Heart left ventricle (tissue), 16 donors: ENCODE measurements at regions of chr4 and their contacts with region 1.

Region 1: DNA sequence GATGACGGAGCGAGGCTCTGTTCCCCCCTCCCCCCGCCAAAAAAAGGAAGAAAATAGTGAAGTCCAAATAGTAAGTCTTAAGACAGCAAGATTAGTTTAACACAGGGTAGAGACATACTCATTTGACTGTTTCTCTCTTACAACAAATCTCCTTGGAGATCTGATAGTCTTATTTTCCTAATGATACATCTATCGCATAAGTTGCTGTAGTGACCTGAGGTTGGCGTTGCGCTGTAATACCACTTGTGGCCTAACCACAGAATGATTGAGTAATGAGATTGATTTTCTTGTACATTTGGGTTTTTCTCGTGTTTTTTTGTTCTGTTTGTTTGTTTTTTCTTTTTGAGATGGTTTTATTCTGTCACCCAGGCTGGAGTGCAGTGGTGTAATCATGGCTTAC is 27.2 kb downstream of the OCIAD1 start:
- DNase-seq: no peak
- ATAC-seq: no peak
- H3K4me3 ChIP-seq: no peak overlapping the region
- H3K27ac ChIP-seq: no peak overlapping the region
- H3K4me1 ChIP-seq: no peaks in the 10 kb centered on the region
- H3K27me3 ChIP-seq: no peaks in the 10 kb centered on the region
- CTCF ChIP-seq: peak in 1 of 12 donors; percentile 7
- POLR2A ChIP-seq: no peak

Region 2: DNA sequence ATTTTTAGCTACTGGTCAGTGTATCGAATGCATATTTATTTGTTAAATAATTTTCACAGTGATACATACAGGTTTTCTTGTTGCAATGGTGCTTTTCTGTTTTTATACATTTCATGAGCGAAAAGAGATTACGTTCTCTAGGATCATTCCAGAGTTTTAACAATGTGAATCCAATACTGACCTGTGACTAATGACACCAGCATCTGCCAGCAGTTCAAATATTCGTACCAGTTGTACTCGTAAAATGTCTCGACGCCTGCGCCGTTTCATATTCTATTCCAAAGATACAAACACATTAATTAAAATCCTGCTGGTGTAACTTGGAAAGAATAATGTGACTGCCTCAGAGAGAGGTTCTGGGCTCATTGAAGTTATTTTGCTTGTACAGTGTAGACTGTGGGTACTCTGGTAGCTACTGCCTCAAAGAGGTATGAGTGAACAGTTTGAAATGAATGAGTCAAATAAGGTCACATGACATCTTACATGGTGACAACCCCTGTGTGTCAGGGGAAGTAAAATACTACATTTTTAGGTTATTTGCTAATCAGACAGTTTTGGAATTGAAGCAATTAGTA is 287.4 kb before region 1 on chr4:
- intact Hi-C with region 1: no loop called
- DNase-seq: no peak
- ATAC-seq: no peak
- H3K4me3 ChIP-seq: no peak overlapping the region
- H3K27ac ChIP-seq: no peak overlapping the region
- H3K4me1 ChIP-seq: no peaks in the 10 kb centered on the region
- H3K27me3 ChIP-seq: no peaks in the 10 kb centered on the region
- CTCF ChIP-seq: no peak
- POLR2A ChIP-seq: no peak

Region 3: GRCh38 chr4:48588230-48589097 is 269.7 kb before region 1 on chr4:
- intact Hi-C with region 1: loop called in 1 of 10 experiments (anchors 10 kb)
- DNase-seq: no peak
- ATAC-seq: no peak
- H3K4me3 ChIP-seq: no peak overlapping the region
- H3K27ac ChIP-seq: no peak overlapping the region
- H3K4me1 ChIP-seq: peaks cover 0 to 23% (median 7%) of the 10 kb centered on the region in 12 donors
- H3K27me3 ChIP-seq: no peaks in the 10 kb centered on the region
- CTCF ChIP-seq: no peak
- POLR2A ChIP-seq: no peak